GM10248 (cell line): ENCODE measurements at regions of chr15 and their contacts with region 1.

Region 1: GRCh38 chr15:80099241-80099640 is 39.8 kb downstream of the ZFAND6 start:
- DNase-seq: peak; percentile 15
- CTCF ChIP-seq: no peak

Region 2: DNA sequence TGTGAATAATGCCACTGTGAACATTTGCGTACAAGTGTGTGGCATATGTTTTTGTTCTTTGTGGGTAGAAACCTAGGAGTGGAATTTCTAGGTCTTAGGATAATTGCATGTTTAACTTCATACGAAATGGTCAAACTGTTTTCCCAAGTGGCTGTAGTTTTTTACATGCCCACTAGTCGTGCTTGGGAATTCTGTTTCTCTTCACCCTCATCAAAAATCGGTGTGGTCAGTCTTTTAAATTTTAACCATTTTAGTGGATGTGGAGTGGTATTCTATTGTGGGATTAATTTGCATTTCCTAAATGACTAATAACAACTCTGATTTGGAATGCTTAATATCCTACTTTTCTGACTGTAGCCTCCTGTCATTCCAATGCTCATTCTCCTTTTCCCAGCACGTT is 12.1 kb before region 1 on chr15:
- CTCF ChIA-PET with region 1: interaction called, 13 read pairs
- POLR2A ChIA-PET with region 1: no interaction called
- DNase-seq: no peak
- CTCF ChIP-seq: no peak

Region 3: GRCh38 chr15:80173022-80173759 is 74.0 kb after region 1 on chr15:
- CTCF ChIA-PET with region 1: no interaction called
- POLR2A ChIA-PET with region 1: no interaction called
- DNase-seq: peak; percentile 81
- CTCF ChIP-seq: peak; percentile 90